Dendritic cell treated with granulocyte-macrophage colony-stimulating factor and Interleukin-4, amounts not matched to agents 40 ng/mL and 50 ng/mL, for 4 days (primary cell): ENCODE measurements at regions of chr21 and their contacts with region 1.

Region 1: GRCh38 chr21:29786496-29787360 is 153.1 kb downstream of the GRIK1 start:
- H3K4me3 Mint-ChIP-seq: no peak overlapping the region
- H3K27ac Mint-ChIP-seq: no peak overlapping the region
- H3K4me1 Mint-ChIP-seq: peaks cover 10% of the 10 kb centered on the region
- H3K27me3 Mint-ChIP-seq: no peaks in the 10 kb centered on the region

Region 2: DNA sequence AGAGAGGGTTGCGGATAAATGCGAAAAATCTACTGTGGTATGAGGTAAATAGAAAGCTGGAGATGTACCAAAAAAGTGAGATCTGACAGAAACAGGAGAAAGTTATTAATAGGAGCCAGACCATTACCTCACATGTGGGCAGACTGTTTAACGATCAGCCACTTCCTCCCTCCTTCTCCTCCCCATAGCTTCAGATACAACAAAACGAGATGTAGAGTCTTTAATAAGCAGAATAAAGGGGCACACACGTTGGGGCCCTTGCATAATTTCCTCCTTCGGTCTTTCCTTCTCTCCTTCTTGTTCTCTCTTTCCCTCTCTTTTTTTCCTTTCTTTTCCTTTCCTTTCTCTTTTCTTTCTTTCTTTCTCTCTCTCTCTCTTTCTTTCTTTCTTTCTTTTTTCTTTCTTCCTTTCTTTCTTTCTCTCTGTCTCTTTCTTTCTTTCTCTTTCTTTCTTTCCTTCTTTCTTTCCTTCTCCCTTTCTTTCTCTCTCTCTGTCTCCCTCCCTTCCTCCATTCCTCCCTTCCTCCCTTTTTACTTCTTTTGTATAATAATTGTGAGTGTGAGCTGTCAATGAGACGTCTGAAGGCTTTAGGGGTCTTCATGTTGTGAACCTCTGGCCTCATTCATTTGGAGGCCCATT is 89.1 kb before region 1 on chr21:
- intact Hi-C with region 1: loop called (anchors 5 kb)
- H3K4me3 Mint-ChIP-seq: no peak overlapping the region
- H3K27ac Mint-ChIP-seq: no peak overlapping the region
- H3K4me1 Mint-ChIP-seq: peaks cover 18% of the 10 kb centered on the region
- H3K27me3 Mint-ChIP-seq: no peaks in the 10 kb centered on the region

Region 3: DNA sequence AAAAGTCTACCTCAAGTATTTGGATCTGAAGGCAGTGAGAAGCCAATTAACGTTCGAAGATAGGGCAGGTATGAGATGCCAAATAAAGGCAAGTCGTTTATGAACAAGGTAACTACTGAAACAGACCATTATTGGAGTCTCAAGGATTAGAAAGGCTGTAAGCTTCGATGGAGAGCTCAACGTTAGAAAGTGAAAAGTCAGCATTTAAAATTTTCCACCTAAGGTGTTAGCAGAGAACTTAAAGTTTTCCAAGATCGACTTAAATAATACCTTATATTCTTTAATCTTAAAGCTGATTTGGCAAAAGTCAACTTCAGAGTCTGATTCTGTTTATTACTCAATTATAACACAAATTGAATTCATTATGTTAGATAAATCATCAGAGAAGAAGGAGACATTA is 351.8 kb after region 1 on chr21:
- intact Hi-C with region 1: no loop called
- H3K4me3 Mint-ChIP-seq: no peak overlapping the region
- H3K27ac Mint-ChIP-seq: no peak overlapping the region
- H3K4me1 Mint-ChIP-seq: no peaks in the 10 kb centered on the region
- H3K27me3 Mint-ChIP-seq: no peaks in the 10 kb centered on the region